ENCODE measurements at regions of chr10 and their contacts with region 1.

Region 1: GRCh38 chr10:30980951-30981616 is 50.6 kb downstream of the ZNF438 start:
- DNase-seq: peak; percentile 95
- ATAC-seq: peak; percentile 94 to 95
- H3K4me3 ChIP-seq: no peak overlapping the region
- H3K27ac ChIP-seq: peak overlapping the region; percentile 82 to 91 (median 84)
- H3K4me1 ChIP-seq: peaks cover 37 to 55% of the 10 kb centered on the region in 2 donors
- H3K27me3 ChIP-seq: no peaks in the 10 kb centered on the region
- CTCF ChIP-seq: no peak
- POLR2A ChIP-seq: peak; percentile 45 to 62

Region 2: DNA sequence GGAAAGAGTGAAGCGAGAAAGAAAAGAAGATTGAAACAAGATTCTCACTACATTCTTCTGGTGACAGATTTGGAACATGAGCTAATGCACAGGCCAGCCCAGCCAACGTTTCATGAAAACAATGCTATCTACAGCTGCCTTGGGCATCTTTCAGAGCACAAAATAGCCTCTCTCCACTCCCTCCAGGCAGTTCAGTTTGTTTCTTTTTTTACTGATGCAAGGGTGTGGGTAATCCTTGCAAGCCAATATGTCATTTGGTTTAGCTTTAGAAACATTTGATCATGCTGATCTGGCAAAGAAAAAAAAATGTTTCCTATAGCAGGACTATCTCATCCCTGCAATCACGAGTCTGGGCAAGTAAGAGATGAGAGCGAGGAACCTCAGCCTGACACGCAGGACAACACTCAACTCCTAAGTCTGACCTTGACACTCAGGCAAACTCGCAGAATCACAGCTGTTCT is 1382.2 kb before region 1 on chr10:
- in situ Hi-C with region 1: no loop called
- intact Hi-C with region 1: loop called (anchors 5 kb)
- DNase-seq: peak in 1 of 2 donors; percentile 63
- ATAC-seq: peak; percentile 59 to 61
- H3K4me3 ChIP-seq: peak overlapping the region in 1 of 4 donors; percentile 16
- H3K27ac ChIP-seq: peak overlapping the region; percentile 95 to 96 (median 96)
- H3K4me1 ChIP-seq: peaks cover 97 to 98% of the 10 kb centered on the region in 2 donors
- H3K27me3 ChIP-seq: no peaks in the 10 kb centered on the region
- CTCF ChIP-seq: no peak
- POLR2A ChIP-seq: no peak

Region 3: DNA sequence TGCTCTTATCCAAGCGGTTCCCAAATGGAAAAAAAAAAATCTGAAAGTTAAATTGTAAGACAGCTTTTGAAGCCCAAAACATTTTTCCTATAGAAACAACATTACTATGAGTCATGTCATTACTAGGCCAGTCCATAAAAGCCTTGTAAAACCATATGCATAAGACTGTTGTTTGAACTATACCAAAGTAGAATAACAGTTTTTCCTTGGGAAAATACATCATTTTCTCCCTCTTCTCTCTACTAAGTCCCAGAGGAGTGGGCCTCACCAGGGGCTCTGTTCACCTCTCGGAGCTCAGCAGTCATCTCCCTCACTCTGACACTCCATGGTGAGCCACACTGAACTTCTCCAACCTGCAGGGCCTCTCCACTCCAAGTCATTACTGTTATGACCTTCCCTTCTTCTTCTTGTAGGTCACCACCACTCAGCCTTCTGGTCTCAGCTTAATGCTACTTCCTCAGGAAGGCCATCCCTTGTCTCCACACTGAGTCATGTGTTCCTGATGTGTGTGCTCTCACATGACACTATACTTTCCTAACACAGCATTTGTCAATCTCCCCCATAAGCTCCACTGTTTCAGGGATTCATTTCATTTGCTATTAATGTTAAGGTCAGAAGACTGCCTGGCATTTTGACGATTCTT is 18.1 kb after region 1 on chr10:
- in situ Hi-C with region 1: no loop called
- intact Hi-C with region 1: loop called (anchors 2 kb)
- DNase-seq: peak; percentile 40 to 78
- ATAC-seq: peak; percentile 91 to 98
- H3K4me3 ChIP-seq: peak overlapping the region; percentile 25 to 49 (median 46)
- H3K27ac ChIP-seq: peak overlapping the region; percentile 72 to 81 (median 74)
- H3K4me1 ChIP-seq: peaks cover 19 to 28% of the 10 kb centered on the region in 2 donors
- H3K27me3 ChIP-seq: no peaks in the 10 kb centered on the region
- CTCF ChIP-seq: no peak
- POLR2A ChIP-seq: peak in 1 of 2 donors; percentile 45

Region 4: DNA sequence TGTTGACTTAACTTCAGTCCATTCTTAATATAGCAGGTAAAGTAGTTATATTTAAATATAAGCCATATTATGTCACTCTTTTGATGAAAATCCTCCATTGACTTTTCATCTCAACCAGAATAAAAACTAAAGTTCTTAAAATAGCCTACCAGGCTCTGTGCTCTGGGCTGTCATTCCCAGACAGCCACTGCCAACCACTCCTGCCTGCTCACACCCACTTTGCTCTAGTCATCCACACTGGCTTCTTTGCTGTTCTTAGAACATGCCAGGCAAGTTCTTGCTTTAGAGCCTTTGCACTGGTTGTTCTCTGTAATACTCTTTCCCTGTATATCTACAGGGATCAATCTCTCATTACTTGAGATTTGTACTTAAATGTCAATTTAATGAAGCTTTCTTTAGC is 418.5 kb after region 1 on chr10:
- in situ Hi-C with region 1: no loop called
- intact Hi-C with region 1: loop called (anchors 5 kb)
- DNase-seq: peak; percentile 75 to 85
- ATAC-seq: peak; percentile 89 to 90
- H3K4me3 ChIP-seq: peak overlapping the region in 2 of 4 donors; percentile 18 to 27
- H3K27ac ChIP-seq: peak overlapping the region; percentile 81 to 92 (median 90)
- H3K4me1 ChIP-seq: peaks cover 87 to 90% of the 10 kb centered on the region in 2 donors
- H3K27me3 ChIP-seq: no peaks in the 10 kb centered on the region
- CTCF ChIP-seq: no peak
- POLR2A ChIP-seq: peak; percentile 9 to 35

Measured in gastrocnemius medialis (tissue), 4 donors.